ENCODE measurements at regions of chr15 and their contacts with region 1.

Region 1: DNA sequence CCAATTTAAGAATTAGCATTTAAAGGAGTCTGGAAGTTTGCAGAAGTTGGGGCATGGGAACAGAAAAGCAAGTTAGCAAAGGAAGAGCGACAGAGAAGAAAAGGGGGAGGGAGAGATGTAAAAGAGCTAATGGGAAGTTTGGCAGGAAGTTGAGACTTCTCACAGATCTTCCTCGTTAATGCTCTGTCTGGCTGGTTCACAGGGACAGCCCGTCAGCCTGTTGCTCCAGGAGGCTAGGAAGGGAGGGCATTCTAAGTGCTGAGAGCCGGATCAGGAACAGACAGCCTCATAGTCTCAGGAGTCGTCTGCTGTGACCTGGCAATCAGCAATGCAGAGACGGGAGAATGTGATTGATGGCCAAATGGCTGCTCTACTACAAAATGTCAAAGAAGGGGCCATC is 150.3 kb downstream of the AGBL1 start:
- DNase-seq: no peak
- ATAC-seq: no peak

Region 2: DNA sequence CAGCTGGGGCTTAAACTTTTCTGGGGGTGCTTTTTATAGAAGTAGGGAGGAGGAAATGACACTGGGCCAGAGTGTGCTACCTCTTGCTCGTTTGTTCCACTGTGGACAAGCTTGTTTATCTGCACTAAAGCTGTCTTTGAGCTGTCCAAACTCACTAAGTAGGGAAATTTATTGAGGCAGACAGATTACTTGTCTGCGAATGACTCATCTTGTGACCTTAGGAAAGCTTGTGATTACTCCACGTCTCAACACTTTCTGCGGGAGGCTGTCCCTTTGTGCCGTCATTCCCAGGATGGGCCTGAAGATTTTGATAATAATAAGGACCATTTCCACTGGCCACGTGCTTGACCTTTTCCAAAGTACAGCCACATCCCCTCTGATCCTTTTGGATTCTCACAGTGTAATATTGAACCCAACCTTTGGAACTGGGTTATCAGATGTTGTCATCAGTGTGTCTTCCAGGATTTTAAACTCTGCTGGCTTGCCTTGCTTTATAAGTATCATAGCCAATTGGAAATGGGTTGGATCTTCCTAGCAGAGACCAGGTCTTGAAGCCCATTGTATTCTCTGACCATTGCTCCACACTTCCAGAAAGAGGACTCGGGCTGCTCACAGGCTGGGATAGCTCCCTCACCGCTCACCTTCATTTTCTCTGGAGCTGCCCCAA is 65.6 kb before region 1 on chr15:
- intact Hi-C with region 1: loop called in 1 of 2 experiments (anchors 10 kb)
- DNase-seq: peak in 1 of 2 donors; percentile 9
- ATAC-seq: no peak

Region 3: GRCh38 chr15:86384186-86384585 is 154.2 kb after region 1 on chr15:
- intact Hi-C with region 1: no loop called
- DNase-seq: no peak
- ATAC-seq: no peak

Region 4: GRCh38 chr15:86572368-86572841 is 342.5 kb after region 1 on chr15:
- intact Hi-C with region 1: no loop called
- DNase-seq: no peak
- ATAC-seq: no peak

Region 5: GRCh38 chr15:86650093-86650492 is 420.2 kb after region 1 on chr15:
- intact Hi-C with region 1: no loop called
- DNase-seq: no peak
- ATAC-seq: peak; percentile 93

Measured in left colon (tissue), 2 donors.